Activated CD4-positive, alpha-beta T cell treated with anti-CD3 and anti-CD28 coated beads, Interleukin-2, amount 10 ng/mL, durations not matched to agents 24 days and 14 days (primary cell): ENCODE measurements at regions of chr4 and their contacts with region 1.

Region 1: GRCh38 chr4:15756361-15756861 is 21.7 kb upstream of the CD38 start:
- DNase-seq: peak; percentile 92
- H3K4me3 Mint-ChIP-seq: peak overlapping the region; percentile 77
- H3K27ac Mint-ChIP-seq: peak overlapping the region; percentile 94
- H3K4me1 Mint-ChIP-seq: peaks cover 51% of the 10 kb centered on the region
- H3K27me3 Mint-ChIP-seq: no peaks in the 10 kb centered on the region

Region 2: GRCh38 chr4:15648600-15648999 is 107.8 kb before region 1 on chr4:
- intact Hi-C with region 1: no loop called
- DNase-seq: no peak
- H3K4me3 Mint-ChIP-seq: peak overlapping the region; percentile 1
- H3K27ac Mint-ChIP-seq: no peak overlapping the region
- H3K4me1 Mint-ChIP-seq: peaks cover 35% of the 10 kb centered on the region
- H3K27me3 Mint-ChIP-seq: no peaks in the 10 kb centered on the region

Region 3: DNA sequence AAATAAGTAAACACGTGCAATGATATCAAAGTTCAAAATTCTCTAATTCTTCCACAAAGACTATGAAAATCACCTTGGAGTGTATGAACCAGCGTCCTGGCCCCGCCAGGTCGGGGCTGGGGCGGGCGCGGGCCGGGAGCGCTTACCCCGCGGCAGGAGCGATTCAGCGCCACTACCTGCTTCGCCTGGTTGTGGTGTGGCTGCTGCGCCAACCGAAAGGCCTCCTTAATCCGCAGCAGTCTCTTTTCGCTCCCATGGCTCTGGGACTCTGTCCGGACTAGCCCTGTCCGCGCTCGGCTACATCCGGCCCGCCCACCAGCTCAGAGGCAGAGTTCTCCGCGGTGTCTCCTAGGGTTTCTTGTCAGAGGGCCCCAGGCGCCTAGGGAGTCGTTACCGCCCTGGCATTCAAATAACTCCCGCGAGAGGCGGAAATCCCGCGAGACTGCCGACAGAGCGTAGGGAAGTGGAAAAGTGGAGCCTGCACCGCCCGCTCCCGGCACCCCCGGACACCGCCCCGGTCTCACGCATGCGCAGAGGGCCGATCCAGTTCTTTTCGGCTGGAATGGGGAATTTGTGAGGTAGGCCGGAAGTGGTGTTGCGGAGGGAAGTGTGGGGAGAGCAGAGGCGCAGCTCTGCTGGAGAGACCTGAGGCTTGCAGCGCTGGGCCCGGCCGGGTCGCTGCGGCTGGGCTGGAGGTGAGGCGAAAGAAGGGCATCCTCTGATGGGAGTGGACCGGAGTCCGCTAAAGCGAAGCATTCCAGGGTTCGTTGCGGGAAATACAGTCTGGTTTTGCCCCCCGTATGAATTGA is 75.0 kb before region 1 on chr4 and contains the start of gene FAM200B:
- intact Hi-C with region 1: loop called (anchors 1 kb)
- DNase-seq: peak; percentile 100
- H3K4me3 Mint-ChIP-seq: peak within 1 kb of the TSS; percentile 100
- H3K27ac Mint-ChIP-seq: peak within 1 kb of the TSS; percentile 99
- H3K4me1 Mint-ChIP-seq: peaks cover 40% of the 10 kb centered on the region
- H3K27me3 Mint-ChIP-seq: no peaks in the 10 kb centered on the region
- total RNA-seq, gene FAM200B: 6.0 and 9.9 TPM in 2 replicates

Region 4: DNA sequence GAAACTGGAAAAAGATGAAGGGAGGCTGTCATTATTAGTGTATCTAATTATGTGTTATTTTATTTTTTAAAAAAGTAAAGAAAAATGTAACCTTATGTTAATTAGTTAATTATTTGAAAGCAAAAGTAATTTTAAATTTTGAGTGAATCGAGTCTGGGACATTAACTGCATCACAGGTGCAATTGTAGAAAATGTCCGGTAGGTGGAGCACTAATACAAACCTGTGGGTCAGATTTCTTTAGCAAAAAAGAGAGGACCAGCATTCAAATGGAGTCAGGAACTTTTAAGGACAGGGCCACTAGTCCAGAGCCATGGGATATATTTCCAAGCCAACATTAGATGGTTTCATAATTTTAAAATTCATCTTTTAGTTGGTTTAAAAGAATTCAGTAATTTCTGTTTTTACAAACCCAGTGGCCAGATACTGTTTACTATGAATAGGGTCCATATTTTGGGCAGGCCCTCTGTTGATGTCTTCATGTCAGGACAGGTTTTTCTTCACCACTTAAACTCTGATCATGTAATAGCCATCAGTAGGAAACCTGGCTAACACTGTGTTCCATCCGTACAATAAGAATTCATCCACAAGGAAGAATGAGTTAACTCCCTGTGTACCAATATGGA is 26.4 kb before region 1 on chr4:
- intact Hi-C with region 1: loop called (anchors 1 kb)
- DNase-seq: peak; percentile 81
- H3K4me3 Mint-ChIP-seq: no peak overlapping the region
- H3K27ac Mint-ChIP-seq: no peak overlapping the region
- H3K4me1 Mint-ChIP-seq: peaks cover 21% of the 10 kb centered on the region
- H3K27me3 Mint-ChIP-seq: peaks cover 2% of the 10 kb centered on the region

Region 5: GRCh38 chr4:15738877-15739276 is 17.5 kb before region 1 on chr4:
- intact Hi-C with region 1: loop called (anchors 1 kb)
- DNase-seq: no peak
- H3K4me3 Mint-ChIP-seq: peak overlapping the region; percentile 27
- H3K27ac Mint-ChIP-seq: peak overlapping the region; percentile 77
- H3K4me1 Mint-ChIP-seq: peaks cover 40% of the 10 kb centered on the region
- H3K27me3 Mint-ChIP-seq: no peaks in the 10 kb centered on the region

Region 6: GRCh38 chr4:15771216-15772058 is 15.0 kb after region 1 on chr4:
- intact Hi-C with region 1: loop called (anchors 1 kb)
- DNase-seq: peak; percentile 83
- H3K4me3 Mint-ChIP-seq: peak overlapping the region; percentile 54
- H3K27ac Mint-ChIP-seq: peak overlapping the region; percentile 80
- H3K4me1 Mint-ChIP-seq: peaks cover 62% of the 10 kb centered on the region
- H3K27me3 Mint-ChIP-seq: no peaks in the 10 kb centered on the region

Region 7: DNA sequence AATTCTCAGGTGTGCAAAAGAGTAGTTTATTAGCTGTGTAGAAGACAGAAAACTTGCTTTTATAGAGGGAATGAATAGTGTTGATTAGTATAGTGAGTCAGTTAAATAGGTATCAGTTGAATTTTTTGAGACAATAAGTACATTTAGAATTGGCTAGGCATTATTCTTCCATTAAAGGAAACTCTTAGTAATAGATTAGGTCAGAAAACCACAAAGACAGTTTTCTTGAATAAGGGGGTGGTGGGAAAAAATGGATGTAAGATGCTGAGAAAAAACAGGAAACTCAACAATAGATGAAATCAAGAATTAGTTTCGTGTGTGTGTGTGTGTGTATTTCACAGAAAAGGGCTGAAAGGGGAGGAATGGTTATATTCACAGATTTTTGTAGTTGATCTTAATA is 38.5 kb after region 1 on chr4:
- intact Hi-C with region 1: loop called (anchors 1 kb)
- DNase-seq: no peak
- H3K4me3 Mint-ChIP-seq: peak overlapping the region; percentile 49
- H3K27ac Mint-ChIP-seq: peak overlapping the region; percentile 79
- H3K4me1 Mint-ChIP-seq: peaks cover 50% of the 10 kb centered on the region
- H3K27me3 Mint-ChIP-seq: peaks cover 1% of the 10 kb centered on the region

Region 8: DNA sequence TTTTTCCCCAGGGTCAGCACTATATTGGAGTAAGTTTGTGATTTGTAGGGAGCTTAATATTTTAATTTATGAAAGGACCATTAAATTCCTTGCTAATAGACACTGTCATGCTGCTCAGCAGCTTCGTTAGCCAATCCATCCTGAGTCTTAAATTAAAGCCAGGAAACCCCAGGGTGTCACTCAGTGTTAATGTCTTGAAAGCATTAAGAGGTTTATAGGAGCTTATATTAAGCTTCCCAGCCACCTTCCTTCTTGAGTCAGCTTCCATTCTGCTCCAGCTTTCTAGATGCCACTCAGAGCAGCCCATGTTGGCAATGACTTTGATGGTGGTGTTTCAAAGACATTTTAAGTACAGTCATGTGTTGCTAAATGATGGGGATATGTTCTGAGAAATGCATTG is 354.5 kb after region 1 on chr4:
- intact Hi-C with region 1: no loop called
- DNase-seq: no peak
- H3K4me3 Mint-ChIP-seq: no peak overlapping the region
- H3K27ac Mint-ChIP-seq: no peak overlapping the region
- H3K4me1 Mint-ChIP-seq: no peaks in the 10 kb centered on the region
- H3K27me3 Mint-ChIP-seq: peaks cover 3% of the 10 kb centered on the region